Sciatic nerve (tissue), 2 donors: ENCODE measurements at regions of chr17 and their contacts with region 1.

Region 1: GRCh38 chr17:11122908-11123307 is 118.1 kb upstream of the SHISA6 start:
- DNase-seq: no peak
- ATAC-seq: peak; percentile 24

Region 2: DNA sequence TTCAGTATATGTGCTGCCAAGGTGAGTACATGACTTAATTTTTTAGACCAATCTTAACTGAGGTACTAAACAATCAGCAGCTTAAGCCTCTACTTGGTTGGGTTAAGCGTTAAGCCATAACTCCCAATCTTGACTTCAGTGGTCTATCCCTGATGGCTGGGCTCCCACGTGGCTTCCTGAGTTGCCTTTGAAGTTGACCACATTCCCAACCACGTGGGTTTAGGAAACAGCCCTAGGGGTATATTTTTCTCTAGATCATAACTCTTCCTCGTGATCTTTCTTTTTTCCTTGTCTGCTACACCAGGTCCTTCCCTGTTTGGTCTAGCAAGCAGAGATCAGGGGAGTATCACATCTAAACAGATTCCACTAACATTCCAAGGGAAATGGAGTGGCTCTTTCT is 264.9 kb before region 1 on chr17:
- intact Hi-C with region 1: no loop called
- DNase-seq: no peak
- ATAC-seq: no peak

Region 3: DNA sequence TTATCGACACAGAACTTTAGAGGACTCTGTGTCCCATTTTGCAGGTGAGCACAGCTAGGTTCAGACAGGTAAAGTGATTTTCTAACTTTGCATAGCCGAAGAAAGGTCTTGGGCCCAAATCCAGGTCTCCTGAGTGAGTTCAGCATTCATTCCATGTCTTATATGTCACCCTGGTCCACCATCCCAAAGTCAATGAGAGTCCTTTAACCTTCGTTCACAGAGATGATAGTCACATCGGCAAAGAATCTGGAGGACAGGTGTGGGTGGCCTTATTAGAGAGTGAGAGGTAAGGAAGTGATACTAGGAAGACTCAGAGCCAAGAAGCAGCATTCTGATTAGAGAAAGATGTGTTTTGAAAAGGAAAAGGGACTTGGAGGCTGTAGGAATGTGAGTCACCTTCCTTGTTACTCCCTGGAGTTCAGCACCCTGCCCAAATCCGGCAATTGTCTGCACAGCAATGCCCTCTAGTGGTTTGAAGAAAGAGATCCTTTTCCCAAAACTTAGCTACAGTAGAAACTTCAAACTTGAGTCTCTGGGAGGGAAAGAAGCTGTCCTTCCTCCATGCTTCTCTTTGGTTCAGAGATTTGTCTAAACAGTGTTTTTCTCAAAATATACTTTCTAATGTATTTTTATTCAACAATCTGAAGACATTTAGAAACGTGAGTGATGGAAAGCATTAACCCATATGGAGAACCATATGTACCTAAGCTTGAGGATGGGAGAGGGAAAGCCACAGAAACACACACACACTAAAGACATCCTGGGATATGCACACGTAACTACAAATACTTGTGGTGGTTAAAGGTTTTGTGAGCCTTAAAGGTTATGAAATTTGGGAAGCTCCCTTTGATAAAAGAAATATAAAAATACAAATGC is 21.7 kb after region 1 on chr17:
- intact Hi-C with region 1: no loop called
- DNase-seq: no peak
- ATAC-seq: peak; percentile 41

Region 4: DNA sequence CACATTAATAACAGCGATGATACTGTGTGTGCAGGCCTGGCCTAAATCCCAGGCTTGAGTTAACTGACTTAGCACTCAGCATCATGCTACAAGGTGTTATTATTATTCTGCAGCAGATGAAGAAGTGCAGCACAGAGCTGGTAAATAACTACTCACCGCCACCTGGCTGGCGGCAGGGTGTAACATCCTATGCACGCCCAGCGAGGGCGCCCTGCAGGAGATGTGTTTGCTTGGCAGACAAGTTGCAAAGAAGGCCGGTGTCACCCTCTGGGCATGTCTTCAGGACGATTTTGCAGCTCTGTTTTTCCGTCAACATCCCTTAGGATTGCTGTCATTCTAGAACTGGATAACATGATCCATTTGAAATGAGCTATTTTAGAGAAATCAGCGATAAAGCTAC is 505.5 kb after region 1 on chr17:
- intact Hi-C with region 1: no loop called
- DNase-seq: no peak
- ATAC-seq: no peak

Region 5: GRCh38 chr17:12201294-12201880 is 1078.5 kb after region 1 on chr17:
- intact Hi-C with region 1: loop called (anchors 10 kb)
- DNase-seq: no peak
- ATAC-seq: no peak